CD4-positive, alpha-beta memory T cell (primary cell): ENCODE measurements at regions of chr1 and their contacts with region 1.

Region 1: GRCh38 chr1:198465201-198466144 is 75.0 kb downstream of the ATP6V1G3 start:
- DNase-seq: peak in 4 of 5 donors; percentile 30 to 36 (median 36)
- H3K4me3 ChIP-seq: no peak overlapping the region
- H3K4me3 Mint-ChIP-seq: no peak overlapping the region
- H3K27ac ChIP-seq: no peak overlapping the region
- H3K27ac Mint-ChIP-seq: no peak overlapping the region
- H3K4me1 ChIP-seq: no peaks in the 10 kb centered on the region
- H3K4me1 Mint-ChIP-seq: peaks cover 0 to 1% (median 0%) of the 10 kb centered on the region in 4 donors
- H3K27me3 ChIP-seq: no peaks in the 10 kb centered on the region
- H3K27me3 Mint-ChIP-seq: peaks cover 0 to under 1% of the 10 kb centered on the region in 2 donors

Region 2: GRCh38 chr1:197614916-197615692 is 850.4 kb before region 1 on chr1:
- CTCF ChIA-PET with region 1: interaction called, 3 read pairs
- POLR2A ChIA-PET with region 1: no interaction called
- intact Hi-C with region 1: loop called (anchors 2 kb)
- DNase-seq: peak in 4 of 5 donors; percentile 1 to 23 (median 12)
- H3K4me3 ChIP-seq: no peak overlapping the region
- H3K4me3 Mint-ChIP-seq: no peak overlapping the region
- H3K27ac ChIP-seq: no peak overlapping the region
- H3K27ac Mint-ChIP-seq: no peak overlapping the region
- H3K4me1 ChIP-seq: no peaks in the 10 kb centered on the region
- H3K4me1 Mint-ChIP-seq: no peaks in the 10 kb centered on the region
- H3K27me3 ChIP-seq: no peaks in the 10 kb centered on the region
- H3K27me3 Mint-ChIP-seq: no peaks in the 10 kb centered on the region